ENCODE measurements at regions of chr13 and their contacts with region 1.

Region 1: DNA sequence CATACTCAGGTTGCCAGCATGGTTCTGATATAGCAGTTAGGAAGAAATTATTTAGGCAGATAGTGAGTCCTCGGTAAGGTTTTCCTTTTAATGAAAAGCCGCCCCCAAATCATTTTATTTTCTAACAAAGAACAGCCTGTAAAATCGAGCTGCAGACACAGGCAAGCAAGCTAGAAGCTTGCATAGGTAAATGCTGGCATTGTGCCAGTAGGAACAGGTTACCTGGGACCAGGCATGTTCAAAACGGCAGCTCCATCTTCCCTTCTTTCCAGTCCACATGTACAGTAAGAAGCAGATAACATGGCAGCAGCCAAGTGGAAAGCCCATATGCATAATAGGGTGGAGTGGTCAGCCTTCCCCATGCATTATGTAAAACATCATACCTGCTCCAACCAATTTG is 71.1 kb downstream of the UGGT2 start:
- DNase-seq: no peak
- H3K4me3 ChIP-seq: no peak overlapping the region
- H3K4me3 Mint-ChIP-seq: no peak overlapping the region
- H3K27ac Mint-ChIP-seq: no peak overlapping the region
- H3K4me1 ChIP-seq: no peaks in the 10 kb centered on the region
- H3K4me1 Mint-ChIP-seq: no peaks in the 10 kb centered on the region
- H3K27me3 ChIP-seq: no peaks in the 10 kb centered on the region
- H3K27me3 Mint-ChIP-seq: no peaks in the 10 kb centered on the region
- CTCF ChIP-seq: no peak

Region 2: GRCh38 chr13:95624020-95624419 is 358.1 kb before region 1 on chr13:
- CTCF ChIA-PET with region 1: interaction called, 3 read pairs
- POLR2A ChIA-PET with region 1: no interaction called
- intact Hi-C with region 1: loop called (anchors 1 kb)
- DNase-seq: peak in 1 of 2 experiments; percentile 68
- H3K4me3 ChIP-seq: no peak overlapping the region
- H3K4me3 Mint-ChIP-seq: no peak overlapping the region
- H3K27ac Mint-ChIP-seq: no peak overlapping the region
- H3K4me1 ChIP-seq: no peaks in the 10 kb centered on the region
- H3K4me1 Mint-ChIP-seq: no peaks in the 10 kb centered on the region
- H3K27me3 ChIP-seq: no peaks in the 10 kb centered on the region
- H3K27me3 Mint-ChIP-seq: no peaks in the 10 kb centered on the region
- CTCF ChIP-seq: peak; percentile 75 to 82

Region 3: GRCh38 chr13:95954266-95954665 is 27.9 kb before region 1 on chr13:
- CTCF ChIA-PET with region 1: interaction called, 3 read pairs
- POLR2A ChIA-PET with region 1: no interaction called
- intact Hi-C with region 1: loop called (anchors 1 kb)
- DNase-seq: peak; percentile 55
- H3K4me3 ChIP-seq: no peak overlapping the region
- H3K4me3 Mint-ChIP-seq: no peak overlapping the region
- H3K27ac Mint-ChIP-seq: peak overlapping the region; percentile 80
- H3K4me1 ChIP-seq: peaks cover 36% of the 10 kb centered on the region
- H3K4me1 Mint-ChIP-seq: peaks cover 31% of the 10 kb centered on the region
- H3K27me3 ChIP-seq: no peaks in the 10 kb centered on the region
- H3K27me3 Mint-ChIP-seq: no peaks in the 10 kb centered on the region
- CTCF ChIP-seq: no peak

Measured in Caco-2 (cell line).